Activated T-helper 2 cell treated with anti-CD3 and anti-CD28 coated beads, Interferon-gamma antibody, Interleukin-2, Interleukin-4, amounts not matched to agents 10 μg/mL and 5 μg/mL and 100 μg/mL, durations not matched to agents 14 hours and 24 hours and 36 hours (primary cell): ENCODE measurements at regions of chr19 and their contacts with region 1.

Region 1: GRCh38 chr19:4400135-4400936 is at the start of gene SH3GL1:
- DNase-seq: peak; percentile 87
- H3K4me3 Mint-ChIP-seq: peak within 1 kb of the TSS; percentile 90
- H3K27ac Mint-ChIP-seq: peak within 1 kb of the TSS; percentile 90
- H3K4me1 Mint-ChIP-seq: peaks cover 49% of the 10 kb centered on the region
- H3K27me3 Mint-ChIP-seq: no peaks in the 10 kb centered on the region
- total RNA-seq, gene SH3GL1: 49.2 and 56.3 TPM in 2 replicates

Region 2: GRCh38 chr19:4246767-4247593 is 153.4 kb before region 1 on chr19 and contains the start of gene YJU2:
- intact Hi-C with region 1: loop called (anchors 2 kb)
- DNase-seq: peak; percentile 99
- H3K4me3 Mint-ChIP-seq: peak within 1 kb of the TSS; percentile 88
- H3K27ac Mint-ChIP-seq: peak within 1 kb of the TSS; percentile 96
- H3K4me1 Mint-ChIP-seq: peaks cover 10% of the 10 kb centered on the region
- H3K27me3 Mint-ChIP-seq: no peaks in the 10 kb centered on the region
- total RNA-seq, gene YJU2: 29.7 and 30.8 TPM in 2 replicates

Region 3: DNA sequence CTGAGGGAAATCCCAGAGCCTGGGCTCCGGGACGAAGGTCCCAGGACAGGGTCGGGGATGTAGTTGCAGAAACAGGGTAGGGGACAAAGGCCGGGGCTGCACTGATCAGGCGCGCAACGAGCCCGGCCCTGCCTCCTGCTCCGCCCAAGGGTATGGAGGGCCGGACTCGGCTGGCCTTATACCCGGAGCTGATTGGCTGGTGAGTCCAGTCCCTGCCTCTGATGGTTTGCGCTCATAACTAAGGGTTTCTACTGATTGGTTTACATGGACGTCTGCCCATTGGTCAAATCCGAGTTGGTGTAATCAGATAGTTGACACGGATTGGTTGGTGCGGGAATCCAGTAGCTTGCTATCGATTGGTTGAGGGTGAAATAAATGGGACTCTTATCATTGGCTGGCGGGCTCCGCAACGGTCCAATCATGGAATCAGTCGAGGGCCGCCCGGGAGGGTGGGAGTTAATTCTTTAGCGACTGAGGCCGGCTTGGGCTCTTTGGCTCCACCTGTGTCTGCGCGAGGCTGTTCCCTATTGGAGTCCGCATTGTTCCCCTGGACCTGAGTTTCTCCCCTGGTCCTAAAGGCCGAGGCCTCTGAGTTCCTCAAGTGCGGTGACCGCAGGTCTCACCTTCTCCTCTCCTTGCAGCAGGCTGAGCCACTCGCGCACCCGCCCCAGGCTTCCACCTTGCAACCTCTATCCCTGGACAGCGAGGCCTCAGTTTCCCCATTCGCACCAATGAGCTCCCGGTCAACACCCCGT is 57.5 kb before region 1 on chr19:
- intact Hi-C with region 1: loop called (anchors 1 kb)
- DNase-seq: peak; percentile 95
- H3K4me3 Mint-ChIP-seq: peak overlapping the region; percentile 92
- H3K27ac Mint-ChIP-seq: peak overlapping the region; percentile 91
- H3K4me1 Mint-ChIP-seq: peaks cover 15% of the 10 kb centered on the region
- H3K27me3 Mint-ChIP-seq: no peaks in the 10 kb centered on the region

Region 4: GRCh38 chr19:4457654-4458395 is 57.5 kb after region 1 on chr19 and contains the start of gene UBXN6:
- intact Hi-C with region 1: loop called (anchors 10 kb)
- DNase-seq: peak; percentile 98
- H3K4me3 Mint-ChIP-seq: peak within 1 kb of the TSS; percentile 92
- H3K27ac Mint-ChIP-seq: peak within 1 kb of the TSS; percentile 85
- H3K4me1 Mint-ChIP-seq: peaks cover 12% of the 10 kb centered on the region
- H3K27me3 Mint-ChIP-seq: no peaks in the 10 kb centered on the region
- total RNA-seq, gene UBXN6: 51.7 and 52.8 TPM in 2 replicates

Region 5: GRCh38 chr19:5622463-5623396 is 1222.4 kb after region 1 on chr19 and contains the starts of genes SAFB and SAFB2:
- intact Hi-C with region 1: loop called (anchors 5 kb)
- DNase-seq: peak; percentile 100
- H3K4me3 Mint-ChIP-seq: peak within 1 kb of the TSS; percentile 100
- H3K27ac Mint-ChIP-seq: peak within 1 kb of the TSS; percentile 100
- H3K4me1 Mint-ChIP-seq: peaks cover 41% of the 10 kb centered on the region
- H3K27me3 Mint-ChIP-seq: no peaks in the 10 kb centered on the region
- total RNA-seq, gene SAFB: 132 and 143 TPM in 2 replicates
- total RNA-seq, gene SAFB2: 96.1 and 96.7 TPM in 2 replicates